ENCODE measurements at regions of chr9 and their contacts with region 1.

Region 1: DNA sequence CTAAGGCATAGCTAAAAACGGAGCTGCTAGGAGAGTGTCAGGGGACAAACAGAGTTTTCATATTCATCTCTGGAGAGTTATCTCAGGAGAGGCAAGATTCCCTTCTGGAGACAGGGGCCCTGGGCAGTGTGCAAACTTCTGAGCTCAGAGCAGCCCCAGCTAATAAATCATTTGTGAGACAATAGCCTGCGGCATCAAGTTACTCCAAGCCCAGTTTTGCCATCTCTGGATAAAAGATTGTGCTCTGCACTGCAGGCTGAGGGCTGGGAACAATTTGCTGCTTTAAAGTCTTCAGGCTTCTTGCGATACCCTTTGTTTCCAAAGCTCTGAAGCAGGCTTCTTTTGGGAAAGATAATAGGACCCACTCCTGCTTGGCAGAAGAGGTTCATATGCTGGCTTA is 164.3 kb upstream of the BRINP1 start:
- DNase-seq: no peak
- ATAC-seq: no peak
- H3K4me3 ChIP-seq: no peak overlapping the region
- H3K4me3 Mint-ChIP-seq: no peak overlapping the region
- H3K27ac ChIP-seq: no peak overlapping the region
- H3K27ac Mint-ChIP-seq: no peak overlapping the region
- H3K4me1 ChIP-seq: no peaks in the 10 kb centered on the region
- H3K4me1 Mint-ChIP-seq: no peaks in the 10 kb centered on the region
- H3K27me3 ChIP-seq: peaks cover 0 to 2% of the 10 kb centered on the region in 2 experiments
- H3K27me3 Mint-ChIP-seq: no peaks in the 10 kb centered on the region

Region 2: GRCh38 chr9:119375892-119376291 is 157.6 kb before region 1 on chr9:
- CTCF ChIA-PET with region 1: no interaction called
- POLR2A ChIA-PET with region 1: no interaction called
- DNase-seq: no peak
- ATAC-seq: no peak
- H3K4me3 ChIP-seq: no peak overlapping the region
- H3K4me3 Mint-ChIP-seq: no peak overlapping the region
- H3K27ac ChIP-seq: no peak overlapping the region
- H3K27ac Mint-ChIP-seq: no peak overlapping the region
- H3K4me1 ChIP-seq: no peaks in the 10 kb centered on the region
- H3K4me1 Mint-ChIP-seq: no peaks in the 10 kb centered on the region
- H3K27me3 ChIP-seq: no peaks in the 10 kb centered on the region
- H3K27me3 Mint-ChIP-seq: peaks cover 6 to 14% of the 10 kb centered on the region in 2 donors

Region 3: GRCh38 chr9:119577881-119578280 is 44.4 kb after region 1 on chr9:
- CTCF ChIA-PET with region 1: interaction called in 1 of 2 experiments, 12 read pairs
- POLR2A ChIA-PET with region 1: no interaction called
- DNase-seq: no peak
- ATAC-seq: no peak
- H3K4me3 ChIP-seq: no peak overlapping the region
- H3K4me3 Mint-ChIP-seq: no peak overlapping the region
- H3K27ac ChIP-seq: no peak overlapping the region
- H3K27ac Mint-ChIP-seq: no peak overlapping the region
- H3K4me1 ChIP-seq: no peaks in the 10 kb centered on the region
- H3K4me1 Mint-ChIP-seq: no peaks in the 10 kb centered on the region
- H3K27me3 ChIP-seq: no peaks in the 10 kb centered on the region
- H3K27me3 Mint-ChIP-seq: no peaks in the 10 kb centered on the region